Panc1 (cell line): ENCODE measurements at regions of chr6 and their contacts with region 1.

Region 1: DNA sequence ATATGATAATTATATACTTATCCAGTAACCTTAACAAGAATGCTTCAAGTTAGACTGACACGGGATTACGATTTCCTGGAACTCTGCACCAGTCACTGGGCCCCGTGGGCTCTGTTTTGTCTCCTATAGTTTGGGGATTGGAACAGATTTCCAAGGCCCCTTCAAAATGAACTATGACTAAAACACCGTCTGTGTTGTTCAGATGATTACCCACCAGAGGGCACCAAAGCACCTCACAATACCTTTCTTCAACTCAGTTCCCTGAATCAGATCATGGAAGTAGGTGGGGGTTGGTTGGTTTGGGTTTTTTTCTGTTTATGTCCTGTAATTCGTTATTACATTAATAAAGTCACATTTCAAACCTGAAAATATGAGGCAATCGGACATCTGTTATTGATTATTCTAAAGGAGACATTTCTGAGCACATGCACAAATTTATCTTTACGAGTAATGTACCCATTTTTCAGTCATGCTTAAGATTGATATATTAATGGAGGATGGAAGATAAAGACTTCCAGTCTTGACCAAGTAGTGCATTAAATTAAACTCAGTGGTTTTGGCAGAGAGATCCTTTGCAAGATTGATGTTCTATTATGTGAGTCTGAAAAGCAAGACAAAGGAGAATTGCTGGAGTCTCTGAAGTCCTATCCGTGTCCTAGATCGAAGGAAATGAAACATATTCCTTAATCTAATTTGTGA is 112.0 kb upstream of the COL21A1 start:
- DNase-seq: no peak
- ATAC-seq: peak; percentile 90
- H3K4me3 ChIP-seq: no peak overlapping the region
- H3K27ac ChIP-seq: no peak overlapping the region
- H3K4me1 ChIP-seq: no peaks in the 10 kb centered on the region
- H3K27me3 ChIP-seq: no peaks in the 10 kb centered on the region
- CTCF ChIP-seq: peak; percentile 86

Region 2: GRCh38 chr6:56445818-56446217 is 86.5 kb after region 1 on chr6:
- CTCF ChIA-PET with region 1: no interaction called
- POLR2A ChIA-PET with region 1: no interaction called
- in situ Hi-C with region 1: no loop called
- intact Hi-C with region 1: loop called (anchors 5 kb)
- DNase-seq: no peak
- ATAC-seq: no peak
- H3K4me3 ChIP-seq: no peak overlapping the region
- H3K27ac ChIP-seq: no peak overlapping the region
- H3K4me1 ChIP-seq: no peaks in the 10 kb centered on the region
- H3K27me3 ChIP-seq: no peaks in the 10 kb centered on the region
- CTCF ChIP-seq: no peak

Region 3: DNA sequence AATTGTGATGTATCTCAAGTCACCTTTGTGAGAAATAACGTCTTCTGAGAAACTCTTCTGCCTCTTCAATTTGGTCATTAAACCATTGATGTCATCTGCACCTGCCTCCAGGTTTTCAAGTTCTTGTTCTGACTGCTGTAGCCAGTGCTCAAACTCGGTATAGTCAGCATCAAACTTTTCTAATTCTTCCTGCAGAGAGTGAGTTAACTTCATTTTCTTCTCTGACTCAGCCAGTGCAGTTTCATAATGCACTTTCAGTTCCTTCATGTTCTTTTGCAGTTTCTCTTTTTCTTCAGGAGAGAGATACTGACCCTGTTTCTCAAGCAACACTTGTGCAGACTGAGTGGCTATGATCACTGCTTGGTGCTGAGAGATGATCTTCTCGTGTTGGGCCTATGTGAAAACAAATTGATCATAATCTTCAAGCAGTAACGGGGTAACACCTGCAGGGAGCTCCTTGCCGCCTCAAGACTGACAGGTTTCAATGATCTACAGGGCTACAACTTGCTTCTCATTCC is 234.5 kb after region 1 on chr6:
- CTCF ChIA-PET with region 1: no interaction called
- POLR2A ChIA-PET with region 1: no interaction called
- in situ Hi-C with region 1: no loop called
- intact Hi-C with region 1: loop called (anchors 1 kb)
- DNase-seq: no peak
- ATAC-seq: no peak
- H3K4me3 ChIP-seq: no peak overlapping the region
- H3K27ac ChIP-seq: no peak overlapping the region
- H3K4me1 ChIP-seq: no peaks in the 10 kb centered on the region
- H3K27me3 ChIP-seq: no peaks in the 10 kb centered on the region
- CTCF ChIP-seq: no peak